BJ (cell line): ENCODE measurements at regions of chr2 and their contacts with region 1.

Region 1: GRCh38 chr2:69553991-69554390 is 89.5 kb downstream of the AAK1 start:
- DNase-seq: no peak
- H3K4me3 ChIP-seq: no peak overlapping the region
- H3K27me3 ChIP-seq: no peaks in the 10 kb centered on the region
- CTCF ChIP-seq: no peak

Region 2: GRCh38 chr2:69565431-69565839 is 11.4 kb after region 1 on chr2:
- CTCF ChIA-PET with region 1: interaction called, 14 read pairs
- POLR2A ChIA-PET with region 1: interaction called, 4 read pairs
- DNase-seq: no peak
- H3K4me3 ChIP-seq: no peak overlapping the region
- H3K27me3 ChIP-seq: no peaks in the 10 kb centered on the region
- CTCF ChIP-seq: peak; percentile 57

Region 3: DNA sequence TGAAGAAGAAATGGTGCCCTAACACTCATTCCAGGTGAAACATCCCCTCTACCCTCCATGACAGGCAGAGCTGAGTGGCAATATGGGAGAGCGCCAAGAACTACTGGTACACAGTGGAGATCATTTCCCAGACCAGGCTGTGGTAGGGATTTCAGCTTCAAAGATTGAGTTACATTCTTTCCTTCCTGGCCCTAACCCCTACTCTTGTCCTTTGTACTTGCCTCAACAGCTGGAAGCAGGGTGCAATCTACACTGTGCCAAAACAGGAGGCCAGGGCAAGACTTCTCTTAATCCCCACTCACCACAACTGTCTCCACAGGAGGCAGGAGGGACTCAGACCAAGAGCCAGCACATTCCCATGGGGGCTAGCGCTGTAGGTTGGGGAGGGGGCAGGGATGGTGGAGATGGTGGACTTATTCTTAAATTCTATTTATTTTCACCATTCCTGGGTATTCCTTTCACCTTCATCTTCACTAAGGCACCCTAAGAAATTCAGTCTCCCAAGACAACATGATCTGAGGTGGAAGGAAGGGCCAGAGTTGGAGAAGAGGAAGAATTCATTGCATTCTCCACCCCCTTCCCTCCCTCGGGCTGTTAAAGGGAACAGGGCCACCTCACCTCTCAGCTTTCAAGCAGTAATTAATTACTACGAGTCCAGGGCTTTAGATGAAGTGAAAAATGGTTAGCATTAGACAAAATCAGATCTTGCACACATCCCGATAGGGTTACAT is 23.6 kb after region 1 on chr2:
- CTCF ChIA-PET with region 1: no interaction called
- POLR2A ChIA-PET with region 1: no interaction called
- DNase-seq: no peak
- H3K4me3 ChIP-seq: no peak overlapping the region
- H3K27me3 ChIP-seq: no peaks in the 10 kb centered on the region
- CTCF ChIP-seq: no peak